Dorsolateral prefrontal cortex (tissue), 120 donors: ENCODE measurements at regions of chr12 and their contacts with region 1.

Region 1: GRCh38 chr12:65602610-65603295 is 221.5 kb upstream of the HMGA2 start:
- DNase-seq: peak in 9 of 10 donors; percentile 13 to 68 (median 51)
- H3K4me3 ChIP-seq: peak overlapping the region in 23 of 59 donors; percentile 1 to 42 (median 20)
- H3K27ac ChIP-seq: no peak overlapping the region
- H3K27me3 ChIP-seq: peaks cover 0 to 49% (median 14%) of the 10 kb centered on the region in 45 donors
- CTCF ChIP-seq: peak; percentile 45 to 82 (median 69)

Region 2: DNA sequence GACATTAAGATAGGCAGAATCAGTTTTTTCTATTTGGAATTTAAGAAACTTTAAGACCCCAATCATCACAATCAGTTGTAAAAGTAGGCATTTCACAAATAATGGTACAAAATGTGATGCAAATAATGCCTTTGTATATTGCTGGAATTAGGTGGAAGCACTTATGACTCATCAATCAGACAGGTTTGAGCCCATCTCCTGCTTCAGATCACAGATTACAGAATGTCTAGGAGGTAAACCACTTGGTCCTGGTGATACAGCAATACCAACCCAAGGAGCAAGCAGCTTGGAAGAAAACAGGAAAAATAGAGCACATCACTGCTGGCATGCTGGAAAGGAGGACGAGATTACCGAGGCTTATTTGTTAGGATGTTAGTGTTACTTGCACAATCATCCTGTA is 1269.8 kb before region 1 on chr12:
- intact Hi-C with region 1: no loop called
- DNase-seq: no peak
- H3K4me3 ChIP-seq: no peak overlapping the region
- H3K27ac ChIP-seq: no peak overlapping the region
- H3K27me3 ChIP-seq: no peaks in the 10 kb centered on the region
- CTCF ChIP-seq: no peak

Region 3: GRCh38 chr12:65675141-65675621 is 72.4 kb after region 1 on chr12:
- intact Hi-C with region 1: loop called in 1 of 2 experiments (anchors 5 kb)
- DNase-seq: no peak
- H3K4me3 ChIP-seq: no peak overlapping the region
- H3K27ac ChIP-seq: no peak overlapping the region
- H3K27me3 ChIP-seq: peaks cover 0 to 4% (median 0%) of the 10 kb centered on the region in 45 donors
- CTCF ChIP-seq: no peak

Region 4: DNA sequence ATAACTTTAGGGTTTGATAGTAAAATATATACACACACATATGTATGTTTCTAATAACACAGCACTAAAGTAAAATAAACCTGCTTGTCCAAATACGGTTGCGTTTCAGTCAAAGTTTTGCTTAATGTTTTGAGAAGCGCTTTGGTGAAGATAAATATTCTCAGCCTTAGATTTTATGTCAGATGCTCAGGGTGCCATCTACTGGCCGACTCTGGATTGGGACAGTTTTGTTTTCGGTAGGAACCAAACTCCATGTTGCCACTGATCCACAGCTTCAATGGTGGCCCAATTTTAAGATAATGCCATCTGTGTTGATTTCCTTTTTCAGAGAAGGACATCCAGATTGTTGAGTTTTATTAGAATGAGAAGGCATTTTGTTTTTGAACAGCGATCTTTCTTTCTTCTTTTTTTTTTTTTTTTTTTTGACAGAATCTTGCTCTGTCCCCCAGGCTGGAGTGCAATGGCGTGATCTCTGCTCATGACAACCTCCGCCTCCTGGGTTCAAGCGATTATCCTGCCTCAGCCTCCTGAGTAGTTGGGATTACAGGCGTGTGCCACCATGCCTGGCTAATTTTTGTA is 484.7 kb after region 1 on chr12:
- intact Hi-C with region 1: loop called in 1 of 2 experiments (anchors 5 kb)
- DNase-seq: peak in 8 of 10 donors; percentile 30 to 77 (median 60)
- H3K4me3 ChIP-seq: no peak overlapping the region
- H3K27ac ChIP-seq: no peak overlapping the region
- H3K27me3 ChIP-seq: peaks cover 0 to 8% (median 0%) of the 10 kb centered on the region in 45 donors
- CTCF ChIP-seq: peak; percentile 48 to 91 (median 76)